Activated naive CD4-positive, alpha-beta T cell treated with anti-CD3 and anti-CD28 coated beads, Interleukin-2, amount 10 ng/mL, durations not matched to agents 7 days and 5 days (primary cell): ENCODE measurements at regions of chr1 and their contacts with region 1.

Region 1: DNA sequence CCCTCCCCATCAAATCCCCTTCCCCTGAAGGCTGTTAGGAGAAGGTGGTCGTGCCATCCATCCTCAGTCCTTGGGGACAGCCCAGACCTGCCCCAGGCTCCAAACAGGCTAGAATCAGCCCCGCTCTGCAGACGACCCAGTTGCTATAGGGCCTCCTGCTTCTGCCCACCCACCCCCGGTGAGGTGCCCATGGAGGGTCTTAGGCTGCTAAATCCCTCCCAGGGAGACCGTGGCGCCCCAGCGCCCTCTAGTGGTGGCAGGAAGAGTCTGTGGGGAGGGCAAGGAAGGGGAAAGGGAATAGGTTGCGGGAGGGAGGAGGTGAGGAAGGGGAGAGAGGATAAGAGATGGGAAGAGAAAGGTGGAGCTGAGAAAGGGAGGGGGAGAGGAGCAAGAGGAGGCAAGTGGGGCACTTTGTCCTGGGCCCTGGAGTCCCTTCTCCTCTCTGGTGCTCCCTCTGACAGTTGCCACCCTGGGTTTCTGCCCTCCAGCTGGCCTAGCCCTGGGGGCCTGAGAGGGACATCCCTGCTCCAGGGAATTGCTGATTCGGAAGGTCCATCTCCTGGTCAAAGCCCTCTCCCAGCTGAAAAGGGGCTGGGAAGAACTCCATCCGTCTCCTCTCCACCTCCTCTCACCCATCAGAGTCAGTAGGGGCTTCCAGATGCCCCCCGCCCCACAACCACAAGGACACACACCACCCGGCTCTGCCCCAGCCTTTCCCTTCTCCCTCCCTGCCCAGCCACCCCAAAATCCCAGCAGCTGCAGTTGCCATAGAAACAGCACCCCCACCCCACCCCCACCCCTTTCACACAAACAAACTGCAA is 55.4 kb downstream of the CAMK2N1 start:
- DNase-seq: peak; percentile 51
- H3K4me3 Mint-ChIP-seq: no peak overlapping the region
- H3K27ac Mint-ChIP-seq: no peak overlapping the region
- H3K4me1 Mint-ChIP-seq: peaks cover 7% of the 10 kb centered on the region
- H3K27me3 Mint-ChIP-seq: peaks cover 59% of the 10 kb centered on the region

Region 2: DNA sequence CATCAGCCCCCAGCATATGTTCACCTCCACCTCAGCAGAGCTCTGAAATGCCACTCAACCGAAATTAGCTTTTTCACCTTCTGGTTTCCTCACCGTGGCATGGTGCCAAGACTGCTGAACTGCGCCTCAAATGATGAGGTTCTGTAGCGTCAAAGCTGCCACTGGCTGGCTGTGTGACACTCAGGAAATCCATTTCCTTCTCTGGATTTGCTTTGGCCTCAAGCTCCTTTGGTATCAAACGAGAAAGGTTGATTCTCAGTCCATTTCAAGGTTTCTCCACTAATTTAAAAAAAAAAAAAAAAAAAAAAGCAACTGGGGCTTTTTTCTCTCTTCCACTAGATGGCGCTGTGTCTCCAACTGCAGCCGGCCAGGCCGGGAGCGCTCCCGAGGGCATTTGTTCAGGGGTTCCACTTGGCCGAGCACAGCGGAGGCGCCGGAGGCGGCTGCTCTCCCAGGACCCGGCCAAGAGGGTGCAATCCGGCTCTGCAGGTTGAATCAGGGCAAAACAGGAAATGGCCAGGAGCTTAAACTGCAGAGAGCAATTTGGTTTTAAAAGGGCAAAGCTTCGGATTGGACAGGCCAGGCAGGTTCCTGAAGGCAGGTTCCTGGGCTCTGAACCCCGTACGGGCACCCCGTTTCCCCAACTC is 217.8 kb before region 1 on chr1:
- CTCF ChIA-PET with region 1: interaction called, 16 read pairs
- DNase-seq: peak; percentile 62
- H3K4me3 Mint-ChIP-seq: no peak overlapping the region
- H3K27ac Mint-ChIP-seq: no peak overlapping the region
- H3K4me1 Mint-ChIP-seq: peaks cover 2% of the 10 kb centered on the region
- H3K27me3 Mint-ChIP-seq: peaks cover 65% of the 10 kb centered on the region

Region 3: DNA sequence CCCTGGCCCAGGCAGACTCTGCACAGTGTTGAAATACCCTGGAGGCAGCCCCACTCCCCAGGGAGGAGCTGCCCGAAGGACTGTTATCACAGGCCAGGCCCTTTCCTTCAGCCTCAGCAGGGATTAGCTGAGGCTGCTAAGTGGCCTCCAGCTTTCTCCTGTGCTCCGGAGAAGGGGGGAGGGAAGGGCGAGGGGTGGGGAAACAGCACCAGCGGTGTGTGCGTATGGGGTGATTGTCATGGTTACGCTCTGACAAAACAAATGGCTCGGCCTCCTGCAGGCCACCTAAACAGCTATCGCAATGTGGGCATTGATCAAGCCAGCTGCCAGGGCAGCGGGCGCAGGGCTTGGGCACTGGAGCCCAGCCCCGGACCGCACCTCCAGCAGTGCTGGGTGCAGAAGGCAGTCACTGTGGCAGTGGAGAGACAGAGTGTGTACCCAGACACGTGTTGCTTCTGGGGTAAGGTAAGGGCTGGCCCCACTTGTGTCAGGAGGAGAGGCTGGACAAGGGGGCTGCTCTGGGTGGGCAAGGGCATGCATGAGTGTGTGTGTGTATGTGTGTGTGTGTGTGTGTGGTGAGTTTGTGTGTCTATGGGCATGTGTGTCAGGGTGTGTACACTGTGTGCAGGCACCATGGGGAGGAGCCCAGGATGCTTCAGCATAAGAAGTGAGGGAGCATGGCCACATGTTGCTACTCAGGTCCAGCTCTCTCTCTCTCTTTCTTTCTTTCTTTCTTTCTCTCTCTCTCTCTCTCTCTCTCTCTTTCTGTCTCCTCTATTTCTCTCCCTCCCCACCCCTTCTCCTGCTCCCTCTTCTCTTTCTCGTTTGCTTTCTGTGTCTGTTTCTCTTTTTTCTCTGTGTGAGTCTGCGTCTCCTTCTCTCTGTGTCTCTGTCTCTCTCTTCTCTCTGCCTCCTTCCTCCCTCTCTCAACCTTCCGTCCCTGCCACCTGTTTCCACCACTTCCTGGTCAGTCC is 139.7 kb before region 1 on chr1 and contains the start of gene VWA5B1:
- CTCF ChIA-PET with region 1: no interaction called
- DNase-seq: no peak
- H3K4me3 Mint-ChIP-seq: peak within 1 kb of the TSS; percentile 26
- H3K27ac Mint-ChIP-seq: no peak within 1 kb of the TSS
- H3K4me1 Mint-ChIP-seq: peaks cover 12% of the 10 kb centered on the region
- H3K27me3 Mint-ChIP-seq: peaks cover 81% of the 10 kb centered on the region